ENCODE measurements at regions of chr6 and their contacts with region 1.

Region 1: DNA sequence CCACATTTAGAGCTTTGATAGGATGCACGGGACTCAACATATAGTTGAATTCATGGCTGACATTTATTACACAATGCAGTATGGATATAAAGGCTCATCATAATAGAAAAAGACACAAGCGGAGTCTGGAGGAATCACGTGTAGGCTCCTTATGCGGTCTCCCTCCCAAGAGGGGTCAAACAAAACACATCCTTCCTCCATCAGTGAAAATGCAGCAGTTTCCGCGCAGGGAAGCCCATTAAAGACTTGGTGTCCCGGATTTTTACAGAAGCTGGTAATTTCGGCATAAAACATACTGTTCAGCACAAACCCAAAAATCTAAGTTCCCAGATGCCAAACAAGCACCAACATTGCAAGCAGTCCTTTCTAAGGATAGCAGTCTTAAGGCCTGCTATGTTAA is 1.1 kb downstream of the USP45 start:
- DNase-seq: no peak
- H3K4me3 ChIP-seq: peak overlapping the region in 1 of 2 donors; percentile 94
- H3K27ac ChIP-seq: peak overlapping the region; percentile 87
- H3K4me1 ChIP-seq: peaks cover 12% of the 10 kb centered on the region
- H3K27me3 ChIP-seq: no peaks in the 10 kb centered on the region
- CTCF ChIP-seq: no peak
- POLR2A ChIP-seq: no peak

Region 2: GRCh38 chr6:99490608-99491007 is 23.5 kb before region 1 on chr6:
- intact Hi-C with region 1: no loop called
- DNase-seq: no peak
- H3K4me3 ChIP-seq: no peak overlapping the region
- H3K27ac ChIP-seq: no peak overlapping the region
- H3K4me1 ChIP-seq: no peaks in the 10 kb centered on the region
- H3K27me3 ChIP-seq: no peaks in the 10 kb centered on the region
- CTCF ChIP-seq: no peak
- POLR2A ChIP-seq: no peak

Region 3: GRCh38 chr6:99568103-99568933 is 54.2 kb after region 1 on chr6 and contains the start of gene CCNC:
- intact Hi-C with region 1: loop called (anchors 2 kb)
- DNase-seq: peak in 1 of 2 donors; percentile 96
- H3K4me3 ChIP-seq: peak within 1 kb of the TSS; percentile 78 to 83
- H3K27ac ChIP-seq: peak within 1 kb of the TSS; percentile 82
- H3K4me1 ChIP-seq: peaks cover 27% of the 10 kb centered on the region
- H3K27me3 ChIP-seq: no peaks in the 10 kb centered on the region
- CTCF ChIP-seq: no peak
- POLR2A ChIP-seq: peak in 1 of 2 donors; percentile 55
- total RNA-seq, gene CCNC: 47.4 TPM